ENCODE measurements at regions of chr6 and their contacts with region 1.

Region 1: GRCh38 chr6:108260809-108261569 is at the start of gene SNX3:
- DNase-seq: peak; percentile 91
- ATAC-seq: peak; percentile 93
- H3K4me3 ChIP-seq: peak within 1 kb of the TSS; percentile 94
- H3K27ac ChIP-seq: peak within 1 kb of the TSS; percentile 99
- H3K4me1 ChIP-seq: peaks cover 8% of the 10 kb centered on the region
- H3K27me3 ChIP-seq: no peaks in the 10 kb centered on the region
- CTCF ChIP-seq: 0 out of 6 replicates have a peak, but pooled peaks of 1 of the 3 experiments have one; percentile 11
- EP300 ChIP-seq: peak in 1 of 2 experiments; percentile 38; a peak in 1 of 4 replicates
- POLR2A ChIP-seq: peak; percentile 88
- RAD21 ChIP-seq: 0 out of 2 replicates have a peak, but pooled peaks have one; percentile 5
- polyA plus RNA-seq, gene SNX3: 43.7 to 78.6 TPM

Region 2: GRCh38 chr6:107957909-107958688 is 302.9 kb before region 1 on chr6 and contains the start of gene SEC63:
- CTCF ChIA-PET with region 1: no interaction called
- POLR2A ChIA-PET with region 1: no interaction called
- RAD21 ChIA-PET with region 1: no interaction called
- SMC1A ChIA-PET with region 1: no interaction called
- in situ Hi-C with region 1: no loop called
- intact Hi-C with region 1: loop called (anchors 1 kb)
- DNase-seq: peak; percentile 87
- ATAC-seq: peak; percentile 95
- H3K4me3 ChIP-seq: peak within 1 kb of the TSS; percentile 86
- H3K27ac ChIP-seq: peak within 1 kb of the TSS; percentile 76
- H3K4me1 ChIP-seq: no peaks in the 10 kb centered on the region; the same call in 1 of the 2 replicates
- H3K27me3 ChIP-seq: no peaks in the 10 kb centered on the region
- CTCF ChIP-seq: no peak
- EP300 ChIP-seq: no peak
- POLR2A ChIP-seq: peak; percentile 96
- RAD21 ChIP-seq: no peak
- polyA plus RNA-seq, gene SEC63: 22.9 to 28.5 TPM

Region 3: DNA sequence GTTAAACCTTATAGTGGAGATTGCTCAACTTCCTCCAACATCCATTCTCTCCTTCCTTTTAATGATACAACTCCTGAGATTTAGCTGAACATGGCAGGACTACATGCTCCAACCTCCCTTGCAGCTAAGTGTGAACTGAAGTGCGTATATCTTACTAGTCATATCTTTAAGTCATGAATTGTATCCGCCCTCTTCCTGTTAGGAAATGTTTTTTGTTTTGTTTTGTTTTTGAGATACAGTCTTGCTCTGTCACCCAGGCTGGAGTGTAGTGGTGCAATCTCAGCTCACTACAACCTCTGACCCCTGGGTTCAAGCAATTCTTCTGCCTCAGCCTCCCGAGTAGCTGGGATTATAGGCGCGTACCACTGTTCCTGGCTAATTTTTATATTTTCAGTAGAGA is 177.6 kb before region 1 on chr6:
- CTCF ChIA-PET with region 1: no interaction called
- POLR2A ChIA-PET with region 1: no interaction called
- RAD21 ChIA-PET with region 1: no interaction called
- SMC1A ChIA-PET with region 1: no interaction called
- in situ Hi-C with region 1: no loop called
- intact Hi-C with region 1: no loop called
- DNase-seq: no peak
- ATAC-seq: no peak
- H3K4me3 ChIP-seq: no peak overlapping the region
- H3K27ac ChIP-seq: no peak overlapping the region
- H3K4me1 ChIP-seq: no peaks in the 10 kb centered on the region
- H3K27me3 ChIP-seq: peaks cover 0 to 2% of the 10 kb centered on the region in 2 experiments; a peak in 2 of 4 replicates
- CTCF ChIP-seq: no peak
- EP300 ChIP-seq: no peak
- POLR2A ChIP-seq: no peak
- RAD21 ChIP-seq: no peak

Region 4: GRCh38 chr6:108294727-108295625 is 34.0 kb after region 1 on chr6 and contains the start of gene AFG1L:
- CTCF ChIA-PET with region 1: interaction called, 4 read pairs
- POLR2A ChIA-PET with region 1: interaction called, 34 read pairs
- RAD21 ChIA-PET with region 1: interaction called, 27 read pairs
- SMC1A ChIA-PET with region 1: interaction called, 9 read pairs
- in situ Hi-C with region 1: no loop called
- intact Hi-C with region 1: loop called (anchors 1 kb)
- DNase-seq: peak; percentile 74
- ATAC-seq: peak; percentile 94
- H3K4me3 ChIP-seq: peak within 1 kb of the TSS; percentile 76
- H3K27ac ChIP-seq: peak within 1 kb of the TSS; percentile 99
- H3K4me1 ChIP-seq: no peaks in the 10 kb centered on the region; the same call in 1 of the 2 replicates
- H3K27me3 ChIP-seq: no peaks in the 10 kb centered on the region
- CTCF ChIP-seq: no peak
- EP300 ChIP-seq: no peak; a peak in 1 of 4 replicates
- POLR2A ChIP-seq: peak; percentile 85
- RAD21 ChIP-seq: no peak
- polyA plus RNA-seq, gene AFG1L: 2.4 to 3.6 TPM

Region 5: DNA sequence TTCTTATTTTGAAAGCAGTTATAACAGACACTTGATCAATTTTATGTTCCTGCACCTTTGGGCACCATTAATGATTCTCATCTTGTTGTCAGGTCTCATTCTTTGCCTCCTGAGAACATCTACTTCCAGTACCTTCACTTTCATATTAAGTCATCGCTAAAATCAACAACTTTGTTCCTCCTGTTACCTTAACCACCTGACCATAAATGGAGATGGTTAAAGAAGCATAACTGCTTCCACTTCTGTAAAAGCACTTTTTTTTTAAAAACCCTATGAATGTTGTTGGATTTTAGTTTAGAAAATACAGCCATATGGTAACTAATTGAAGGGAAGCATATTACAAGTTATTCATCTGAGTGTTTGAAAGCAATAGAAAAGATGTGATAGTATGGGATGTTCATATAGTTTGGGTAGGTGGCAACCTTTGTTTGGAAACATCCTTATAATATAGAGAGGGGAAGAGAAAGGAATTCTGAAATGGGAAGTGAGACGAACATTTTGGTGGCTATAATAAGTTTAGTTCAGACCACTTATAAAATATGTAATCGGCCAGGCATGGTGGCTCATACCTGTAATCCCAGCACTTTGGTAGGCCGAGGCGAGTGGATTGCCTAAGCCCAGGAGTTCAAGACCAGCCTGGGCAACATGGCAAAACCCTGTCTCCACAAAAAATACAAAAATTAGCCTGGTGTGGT is 87.8 kb after region 1 on chr6:
- CTCF ChIA-PET with region 1: interaction called, 6 read pairs
- POLR2A ChIA-PET with region 1: interaction called, 4 read pairs
- RAD21 ChIA-PET with region 1: interaction called, 3 read pairs
- SMC1A ChIA-PET with region 1: interaction called, 3 read pairs
- in situ Hi-C with region 1: no loop called
- intact Hi-C with region 1: loop called (anchors 1 kb)
- DNase-seq: peak; percentile 77
- ATAC-seq: peak; percentile 95
- H3K4me3 ChIP-seq: peak overlapping the region; percentile 4; the same call in 1 of the 2 replicates
- H3K27ac ChIP-seq: peak overlapping the region; percentile 94
- H3K4me1 ChIP-seq: peaks cover 22% of the 10 kb centered on the region
- H3K27me3 ChIP-seq: no peaks in the 10 kb centered on the region
- CTCF ChIP-seq: no peak
- EP300 ChIP-seq: peak; percentile 59 to 92; a peak in 3 of 4 replicates
- POLR2A ChIP-seq: no peak
- RAD21 ChIP-seq: no peak

Region 6: DNA sequence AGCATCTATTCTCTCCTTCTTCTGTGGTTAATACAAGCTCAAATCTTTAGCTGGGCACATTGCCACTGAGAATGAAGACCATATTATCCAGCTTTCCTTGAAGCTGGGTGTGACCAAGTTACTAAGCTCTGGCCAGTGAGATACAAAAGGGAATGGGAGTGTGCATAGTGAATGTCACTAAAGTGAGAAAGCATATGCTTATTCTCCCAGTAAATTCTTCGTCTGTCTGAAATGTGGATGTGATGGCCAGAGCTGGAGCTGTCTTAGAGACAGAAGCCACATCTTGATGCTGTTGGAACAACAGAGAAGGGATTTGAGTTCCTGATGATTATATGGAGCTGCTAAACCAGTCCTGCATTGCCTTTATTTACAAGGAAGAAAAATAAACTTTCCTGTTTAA is 773.5 kb after region 1 on chr6:
- CTCF ChIA-PET with region 1: no interaction called
- POLR2A ChIA-PET with region 1: no interaction called
- RAD21 ChIA-PET with region 1: no interaction called
- SMC1A ChIA-PET with region 1: no interaction called
- in situ Hi-C with region 1: no loop called
- intact Hi-C with region 1: no loop called
- DNase-seq: no peak
- ATAC-seq: no peak
- H3K4me3 ChIP-seq: no peak overlapping the region
- H3K27ac ChIP-seq: no peak overlapping the region
- H3K4me1 ChIP-seq: no peaks in the 10 kb centered on the region
- H3K27me3 ChIP-seq: no peaks in the 10 kb centered on the region; a peak in 1 of 4 replicates
- CTCF ChIP-seq: no peak
- EP300 ChIP-seq: no peak
- POLR2A ChIP-seq: no peak
- RAD21 ChIP-seq: no peak